ENCODE measurements at regions of chr19 and their contacts with region 1.

Region 1: GRCh38 chr19:8017808-8018207 is 12.4 kb upstream of the ELAVL1 start:
- DNase-seq: no peak
- ATAC-seq: peak; percentile 98
- H3K4me3 ChIP-seq: no peak overlapping the region
- H3K27ac ChIP-seq: no peak overlapping the region
- H3K4me1 ChIP-seq: no peaks in the 10 kb centered on the region; the same call in 1 of the 2 replicates
- H3K27me3 ChIP-seq: no peaks in the 10 kb centered on the region
- CTCF ChIP-seq: peak; percentile 68 to 82 (median 73)
- EP300 ChIP-seq: no peak
- POLR2A ChIP-seq: no peak
- RAD21 ChIP-seq: peak; percentile 76

Region 2: GRCh38 chr19:8041531-8041931 is 23.7 kb after region 1 on chr19:
- CTCF ChIA-PET with region 1: no interaction called
- POLR2A ChIA-PET with region 1: no interaction called
- RAD21 ChIA-PET with region 1: no interaction called
- SMC1A ChIA-PET with region 1: no interaction called
- in situ Hi-C with region 1: no loop called
- intact Hi-C with region 1: no loop called
- DNase-seq: no peak
- ATAC-seq: no peak
- H3K4me3 ChIP-seq: no peak overlapping the region
- H3K27ac ChIP-seq: no peak overlapping the region
- H3K4me1 ChIP-seq: no peaks in the 10 kb centered on the region
- H3K27me3 ChIP-seq: no peaks in the 10 kb centered on the region
- CTCF ChIP-seq: no peak
- EP300 ChIP-seq: no peak
- POLR2A ChIP-seq: no peak
- RAD21 ChIP-seq: no peak

Region 3: DNA sequence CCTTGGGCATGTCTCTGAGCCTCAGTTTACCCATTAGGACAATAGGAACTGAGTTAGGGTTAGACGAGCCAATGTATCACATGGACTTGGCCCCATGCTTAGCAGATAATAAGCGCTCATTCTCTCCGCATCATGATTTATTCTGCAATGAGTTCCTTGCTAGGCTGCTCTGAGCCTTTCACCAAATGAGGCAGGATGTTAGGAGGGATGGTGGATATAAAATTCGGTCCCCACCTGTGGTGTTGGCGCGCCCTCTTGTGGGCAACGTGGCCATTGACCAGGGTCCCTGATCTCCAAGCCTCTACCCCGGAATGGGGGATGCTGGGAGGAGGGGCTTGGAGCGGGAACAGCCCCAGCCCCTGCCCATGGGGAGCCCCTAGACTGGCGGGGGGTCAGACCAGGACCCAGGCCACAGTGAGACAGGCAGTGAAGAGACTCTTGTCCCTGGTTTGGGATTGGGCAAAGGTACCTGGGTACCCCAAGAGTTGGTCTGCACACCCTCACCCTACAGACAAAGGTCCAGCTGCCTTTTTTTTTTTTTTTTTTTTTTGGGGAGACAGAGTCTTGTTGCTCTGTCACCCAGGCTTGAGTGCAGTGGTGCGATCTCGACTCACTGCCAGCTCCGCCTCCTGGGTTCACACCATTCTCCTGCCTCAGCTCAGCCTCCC is 235.2 kb after region 1 on chr19:
- CTCF ChIA-PET with region 1: no interaction called
- POLR2A ChIA-PET with region 1: no interaction called
- RAD21 ChIA-PET with region 1: no interaction called
- SMC1A ChIA-PET with region 1: no interaction called
- in situ Hi-C with region 1: loop called (anchors 10 kb)
- intact Hi-C with region 1: loop called (anchors 5 kb)
- DNase-seq: peak; percentile 48
- ATAC-seq: peak; percentile 98
- H3K4me3 ChIP-seq: no peak overlapping the region
- H3K27ac ChIP-seq: no peak overlapping the region
- H3K4me1 ChIP-seq: no peaks in the 10 kb centered on the region
- H3K27me3 ChIP-seq: no peaks in the 10 kb centered on the region
- CTCF ChIP-seq: peak; percentile 86 to 98 (median 87); a peak in 5 of 6 replicates
- EP300 ChIP-seq: no peak
- POLR2A ChIP-seq: no peak
- RAD21 ChIP-seq: peak; percentile 99

Measured in GM12878 (cell line).